Activated CD4-positive, alpha-beta T cell treated with anti-CD3 and anti-CD28 coated beads, Interleukin-2, amount 10 ng/mL, durations not matched to agents 24 days and 14 days (primary cell): ENCODE measurements at regions of chr2 and their contacts with region 1.

Region 1: GRCh38 chr2:68751397-68752339 is 17.1 kb downstream of the ARHGAP25 start:
- DNase-seq: peak; percentile 96
- H3K4me3 Mint-ChIP-seq: peak overlapping the region; percentile 23
- H3K27ac Mint-ChIP-seq: peak overlapping the region; percentile 83
- H3K4me1 Mint-ChIP-seq: peaks cover 73% of the 10 kb centered on the region
- H3K27me3 Mint-ChIP-seq: no peaks in the 10 kb centered on the region

Region 2: DNA sequence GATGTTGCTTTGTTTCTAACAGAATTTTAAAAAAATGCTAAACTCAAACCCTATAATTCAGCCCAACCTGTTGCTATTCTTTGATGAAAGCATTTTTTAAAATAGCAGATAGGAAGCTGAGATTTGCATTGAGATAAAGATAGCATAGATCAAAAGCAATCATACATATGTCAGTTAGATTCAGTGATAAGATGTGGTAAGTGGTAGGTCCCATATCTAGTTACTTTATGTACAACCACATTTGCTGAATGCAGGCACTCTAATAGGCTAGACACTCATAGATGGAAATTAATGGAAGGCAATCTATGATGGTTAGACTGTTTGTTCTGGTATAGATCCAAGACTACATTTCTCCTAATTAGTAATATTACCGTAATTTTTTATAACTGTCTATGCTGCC is 661.7 kb before region 1 on chr2:
- intact Hi-C with region 1: no loop called
- DNase-seq: no peak
- H3K4me3 Mint-ChIP-seq: no peak overlapping the region
- H3K27ac Mint-ChIP-seq: no peak overlapping the region
- H3K4me1 Mint-ChIP-seq: no peaks in the 10 kb centered on the region
- H3K27me3 Mint-ChIP-seq: peaks cover 1% of the 10 kb centered on the region

Region 3: DNA sequence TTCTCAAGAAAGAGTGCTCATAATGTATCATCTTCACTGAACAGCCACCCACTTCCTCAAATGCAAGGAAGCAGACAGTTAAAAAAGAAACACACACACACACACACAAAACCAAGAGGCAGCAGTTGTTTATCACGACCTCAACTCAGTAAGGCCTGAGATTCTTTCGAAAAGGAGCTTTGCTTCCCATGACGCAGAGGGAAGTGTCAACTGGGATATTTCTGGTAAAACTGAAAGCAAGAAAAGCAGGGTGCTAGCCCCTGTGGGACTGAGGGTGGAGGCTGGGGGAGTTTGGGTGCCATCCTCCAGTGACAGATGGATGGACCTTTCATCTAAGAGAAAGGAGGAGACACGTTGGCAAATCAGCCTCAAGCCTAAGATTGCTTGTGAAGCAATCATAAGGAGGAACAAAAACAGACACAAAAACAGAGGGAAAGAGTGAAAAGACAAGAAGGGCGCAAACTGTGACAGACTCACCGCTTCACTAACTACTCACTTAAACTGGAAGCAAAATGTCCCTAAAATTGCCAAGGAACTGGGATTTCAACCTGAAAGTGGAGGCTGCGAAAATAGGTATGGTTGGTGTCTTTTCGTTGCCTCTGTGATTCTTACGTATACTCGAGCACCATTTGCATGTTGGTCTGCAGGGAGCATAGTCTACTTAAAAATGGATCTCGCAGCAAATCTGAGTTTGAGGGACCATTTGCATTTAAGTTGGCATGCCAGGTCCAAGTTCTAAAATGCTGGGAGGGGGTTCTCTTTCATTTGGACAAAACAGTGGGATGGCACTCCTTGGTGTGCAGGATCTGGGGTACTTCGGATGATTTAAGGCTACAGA is 16.8 kb before region 1 on chr2 and contains the start of gene ARHGAP25:
- intact Hi-C with region 1: loop called (anchors 2 kb)
- DNase-seq: peak; percentile 89
- H3K4me3 Mint-ChIP-seq: no peak within 1 kb of the TSS
- H3K27ac Mint-ChIP-seq: no peak within 1 kb of the TSS
- H3K4me1 Mint-ChIP-seq: peaks cover 41% of the 10 kb centered on the region
- H3K27me3 Mint-ChIP-seq: no peaks in the 10 kb centered on the region
- total RNA-seq, gene ARHGAP25: 37.8 and 42.2 TPM in 2 replicates

Region 4: DNA sequence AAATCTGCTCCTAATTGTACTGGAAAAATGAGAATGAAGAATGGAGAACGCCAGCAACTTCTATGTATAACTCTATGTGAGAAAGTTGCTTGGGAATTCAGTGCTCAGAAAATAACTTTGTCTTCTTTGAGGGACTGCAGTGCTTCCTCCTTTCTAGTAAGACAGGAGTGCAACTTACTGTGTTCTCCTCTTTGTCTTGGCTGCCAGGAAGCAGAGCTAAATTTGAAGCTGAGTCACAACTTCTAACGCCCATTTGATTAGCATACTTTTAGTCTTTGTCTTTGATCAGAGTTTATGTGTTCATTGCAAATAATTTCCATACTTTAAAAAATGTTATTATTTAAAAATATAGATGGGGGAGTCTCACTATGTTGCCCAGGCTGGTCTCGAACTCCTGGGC is 10.4 kb before region 1 on chr2:
- intact Hi-C with region 1: loop called (anchors 1 kb)
- DNase-seq: peak; percentile 73
- H3K4me3 Mint-ChIP-seq: no peak overlapping the region
- H3K27ac Mint-ChIP-seq: peak overlapping the region; percentile 98
- H3K4me1 Mint-ChIP-seq: peaks cover 85% of the 10 kb centered on the region
- H3K27me3 Mint-ChIP-seq: no peaks in the 10 kb centered on the region

Region 5: DNA sequence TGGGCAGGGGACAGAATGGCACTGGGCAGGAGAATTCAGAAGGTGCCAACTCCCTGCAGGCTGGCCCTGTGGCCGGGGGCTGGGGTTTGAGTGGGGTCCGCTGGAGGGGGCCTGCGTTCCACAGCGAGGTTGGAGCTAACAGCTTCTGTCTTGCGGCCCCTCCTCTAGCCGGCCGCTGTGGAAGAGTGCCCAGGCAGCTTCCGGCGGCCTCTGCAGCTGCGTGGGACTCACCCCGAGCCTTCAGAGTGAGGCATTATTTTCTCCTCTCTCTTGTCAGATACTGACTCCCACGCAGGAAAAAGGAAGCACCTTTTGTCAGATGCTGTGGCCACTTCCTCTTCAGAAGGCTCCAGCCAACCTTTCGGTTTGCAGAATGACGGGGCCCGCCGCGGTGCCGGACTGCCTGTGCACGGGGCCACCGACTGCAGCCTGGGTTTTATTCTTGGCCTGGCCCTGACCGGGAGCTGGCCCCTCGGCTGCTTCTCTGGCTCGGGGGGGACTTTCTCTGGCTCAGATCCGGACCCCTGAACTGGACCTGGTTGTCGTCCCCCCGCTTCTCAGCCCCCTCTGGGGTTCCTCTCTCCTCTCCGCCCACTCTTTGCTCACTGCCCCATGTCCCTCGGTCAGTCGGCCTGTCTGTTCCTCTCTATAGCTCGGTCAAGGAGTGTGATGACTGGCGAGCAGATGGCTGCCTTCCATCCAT is 23.1 kb after region 1 on chr2:
- intact Hi-C with region 1: loop called (anchors 1 kb)
- DNase-seq: peak; percentile 89
- H3K4me3 Mint-ChIP-seq: peak overlapping the region; percentile 88
- H3K27ac Mint-ChIP-seq: peak overlapping the region; percentile 96
- H3K4me1 Mint-ChIP-seq: peaks cover 81% of the 10 kb centered on the region
- H3K27me3 Mint-ChIP-seq: no peaks in the 10 kb centered on the region

Region 6: DNA sequence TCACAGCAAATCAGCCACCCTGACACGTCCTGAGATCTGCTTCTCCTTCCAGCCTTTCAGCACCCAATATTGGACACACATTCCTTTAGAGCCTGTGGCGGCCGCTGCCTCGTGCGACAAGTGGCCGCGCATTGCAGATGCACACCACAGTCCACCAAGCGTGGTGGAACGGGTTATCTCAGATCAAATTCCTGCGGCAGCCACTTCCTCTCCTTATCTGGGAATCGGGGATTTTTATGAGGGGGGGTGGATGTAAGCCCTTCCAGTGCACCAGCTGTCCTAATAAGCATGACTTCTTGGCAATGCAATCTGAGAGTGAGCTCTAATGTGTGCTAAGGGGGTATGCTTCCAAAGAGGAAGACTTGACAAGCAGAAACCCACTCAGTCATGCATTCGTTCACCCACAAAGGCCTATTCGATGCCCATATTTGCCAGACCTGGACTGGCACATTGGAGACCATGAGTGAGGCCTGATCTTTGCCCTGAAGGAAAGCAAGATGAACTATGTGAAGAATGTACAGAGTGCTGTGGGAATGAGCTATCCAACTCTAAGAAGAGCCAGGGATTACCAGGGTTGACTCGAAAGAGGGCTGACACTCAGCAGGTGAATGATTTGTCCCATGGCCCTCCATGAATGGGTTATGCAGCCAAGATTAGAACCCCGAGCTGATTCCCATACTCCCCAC is 138.0 kb after region 1 on chr2:
- intact Hi-C with region 1: no loop called
- DNase-seq: no peak
- H3K4me3 Mint-ChIP-seq: no peak overlapping the region
- H3K27ac Mint-ChIP-seq: no peak overlapping the region
- H3K4me1 Mint-ChIP-seq: peaks cover 4% of the 10 kb centered on the region
- H3K27me3 Mint-ChIP-seq: peaks cover 22% of the 10 kb centered on the region